ENCODE measurements at regions of chr1 and their contacts with region 1.

Region 1: GRCh38 chr1:167721617-167722151 is at the start of gene MPZL1:
- DNase-seq: peak; percentile 99
- H3K4me3 ChIP-seq: peak within 1 kb of the TSS; percentile 77 to 99 (median 90)
- H3K27ac ChIP-seq: peak within 1 kb of the TSS; percentile 82 to 95 (median 92)
- H3K4me1 ChIP-seq: peaks cover 19 to 53% (median 49%) of the 10 kb centered on the region in 4 donors
- H3K27me3 ChIP-seq: no peaks in the 10 kb centered on the region
- CTCF ChIP-seq: no peak
- EP300 ChIP-seq: no peak
- POLR2A ChIP-seq: peak; percentile 71
- total RNA-seq, gene MPZL1: 72.7 to 130 (median 107) TPM

Region 2: GRCh38 chr1:167803358-167804207 is 81.9 kb after region 1 on chr1:
- intact Hi-C with region 1: loop called (anchors 2 kb)
- DNase-seq: peak; percentile 97
- H3K4me3 ChIP-seq: no peak overlapping the region
- H3K27ac ChIP-seq: no peak overlapping the region
- H3K4me1 ChIP-seq: peaks cover 3 to 13% (median 8%) of the 10 kb centered on the region in 4 donors
- H3K27me3 ChIP-seq: no peaks in the 10 kb centered on the region
- CTCF ChIP-seq: peak; percentile 94 to 98 (median 95)
- EP300 ChIP-seq: no peak
- POLR2A ChIP-seq: no peak